Posterior cingulate gyrus (tissue), 11 donors: ENCODE measurements at regions of chr5 and their contacts with region 1.

Region 1: GRCh38 chr5:64612344-64612961 is 77.8 kb upstream of the SHISAL2B start:
- DNase-seq: peak in 3 of 10 donors; percentile 26 to 53 (median 26)

Region 2: DNA sequence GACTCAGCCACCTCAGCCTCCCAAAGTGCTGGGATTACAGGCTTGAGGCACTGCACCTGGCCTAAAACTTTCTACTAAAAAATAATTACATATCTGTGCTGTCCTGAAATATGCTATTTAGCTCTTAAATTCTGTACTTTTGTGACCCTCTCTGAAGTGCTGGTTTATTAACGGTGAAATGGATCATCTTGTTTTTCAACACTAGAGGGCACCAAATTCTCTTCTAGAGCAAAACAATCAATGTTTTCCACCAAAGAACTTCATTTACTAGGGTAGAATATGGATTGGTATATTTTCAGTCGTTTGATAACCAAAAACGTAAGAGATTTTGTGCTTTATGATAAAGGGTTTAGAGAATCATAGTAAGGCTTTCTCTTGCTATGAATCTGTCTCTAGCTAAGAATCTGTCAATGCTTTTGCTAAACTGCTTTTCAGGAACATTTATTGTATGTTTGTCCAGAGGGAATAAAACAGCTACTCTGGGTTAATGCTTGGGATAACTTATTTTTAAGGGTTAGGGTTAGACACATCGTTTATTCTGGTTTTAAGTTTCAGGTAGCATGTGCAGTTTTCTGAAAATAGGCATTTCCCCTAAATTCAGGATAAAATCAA is 383.2 kb before region 1 on chr5:
- intact Hi-C with region 1: loop called (anchors 1 kb)
- DNase-seq: no peak

Region 3: DNA sequence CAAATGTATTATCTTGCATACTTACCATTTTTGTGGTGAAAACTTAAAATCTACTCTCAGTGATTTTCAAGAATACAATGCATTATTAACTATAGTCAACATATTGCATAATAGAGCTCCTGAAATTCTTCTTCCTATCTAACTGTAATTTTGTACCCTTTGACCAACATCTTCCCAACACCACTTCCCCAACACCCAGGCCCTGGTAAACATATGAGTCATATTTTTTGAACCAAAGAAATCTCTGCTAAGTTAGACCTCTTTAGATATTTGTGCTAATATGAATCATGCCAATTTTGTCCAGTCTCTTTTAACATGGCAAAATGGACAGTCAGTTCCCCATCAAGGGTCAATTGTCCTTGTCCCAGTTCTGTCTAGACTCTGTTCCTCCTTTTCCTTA is 125.2 kb before region 1 on chr5:
- intact Hi-C with region 1: no loop called
- DNase-seq: no peak

Region 4: GRCh38 chr5:64505769-64506566 is 106.5 kb before region 1 on chr5 and contains the start of gene RGS7BP:
- intact Hi-C with region 1: loop called (anchors 5 kb)
- DNase-seq: peak; percentile 32 to 96 (median 73)

Region 5: GRCh38 chr5:64822320-64822719 is 209.9 kb after region 1 on chr5:
- intact Hi-C with region 1: no loop called
- DNase-seq: no peak